ENCODE measurements at regions of chr9 and their contacts with region 1.

Region 1: GRCh38 chr9:6049798-6050197 is 34.4 kb upstream of the RANBP6 start:
- DNase-seq: peak; percentile 60
- H3K4me3 Mint-ChIP-seq: no peak overlapping the region
- H3K27ac Mint-ChIP-seq: no peak overlapping the region
- H3K4me1 Mint-ChIP-seq: peaks cover 8% of the 10 kb centered on the region
- H3K27me3 Mint-ChIP-seq: peaks cover 22% of the 10 kb centered on the region

Region 2: DNA sequence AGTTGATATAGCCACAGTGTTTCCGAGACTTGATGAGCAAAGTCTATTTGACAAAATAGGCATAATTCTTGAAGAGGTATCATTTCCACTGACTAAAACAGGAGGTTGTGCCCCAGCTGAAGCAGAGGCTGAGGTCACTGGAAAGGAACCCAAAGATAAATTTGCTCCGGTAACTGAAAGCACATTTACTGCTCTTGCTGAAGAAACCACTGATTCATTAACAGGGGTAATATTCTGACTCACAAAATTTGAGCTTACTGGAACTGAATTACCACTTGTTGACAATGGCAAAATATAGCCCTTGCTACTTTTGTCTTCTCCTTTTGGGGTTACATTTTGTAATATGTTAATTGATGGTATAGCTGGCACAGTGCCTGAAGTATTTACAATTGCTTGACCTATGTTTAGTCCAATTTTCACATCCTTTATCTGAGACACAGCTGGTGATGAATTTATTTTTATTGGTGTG is 128.9 kb before region 1 on chr9:
- CTCF ChIA-PET with region 1: no interaction called
- DNase-seq: no peak
- H3K4me3 Mint-ChIP-seq: no peak overlapping the region
- H3K27ac Mint-ChIP-seq: no peak overlapping the region
- H3K4me1 Mint-ChIP-seq: no peaks in the 10 kb centered on the region
- H3K27me3 Mint-ChIP-seq: no peaks in the 10 kb centered on the region

Region 3: GRCh38 chr9:6024020-6024554 is 25.7 kb before region 1 on chr9:
- CTCF ChIA-PET with region 1: interaction called, 10 read pairs
- DNase-seq: peak; percentile 40
- H3K4me3 Mint-ChIP-seq: no peak overlapping the region
- H3K27ac Mint-ChIP-seq: no peak overlapping the region
- H3K4me1 Mint-ChIP-seq: peaks cover 4% of the 10 kb centered on the region
- H3K27me3 Mint-ChIP-seq: peaks cover 22% of the 10 kb centered on the region